Endothelial cell of umbilical vein (primary cell): ENCODE measurements at regions of chr14 and their contacts with region 1.

Region 1: DNA sequence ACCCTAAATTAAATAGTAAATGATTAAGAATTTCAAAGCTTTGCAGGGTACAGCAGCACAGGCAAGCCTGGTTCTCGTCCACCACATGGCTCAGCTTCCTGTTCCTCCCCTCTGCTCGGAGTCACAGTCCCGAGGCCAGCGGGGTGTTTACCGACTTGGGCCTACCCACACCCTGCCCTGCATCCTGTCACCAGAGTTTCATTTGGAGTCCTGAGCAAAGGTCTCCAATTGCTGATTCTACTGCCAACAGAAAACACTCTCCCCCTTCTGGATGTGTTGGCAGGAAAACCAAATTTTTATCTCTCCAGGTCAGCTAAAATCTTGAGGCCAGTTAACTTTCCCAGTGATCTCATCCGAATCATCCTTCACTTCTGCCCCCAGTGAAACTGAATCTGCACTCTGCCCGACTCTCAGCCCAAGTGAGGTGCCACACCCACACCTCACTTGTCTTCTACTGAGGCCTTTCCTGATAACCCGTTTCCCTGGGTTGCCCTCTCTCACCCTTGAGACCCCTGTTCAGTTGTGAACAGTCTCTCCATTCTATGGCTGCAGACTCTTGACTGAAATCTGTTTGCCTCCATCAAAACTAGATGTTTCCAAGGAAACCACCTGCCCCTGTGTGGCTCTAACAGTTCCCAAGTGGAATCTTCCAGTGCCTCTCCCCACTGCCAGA is 71.2 kb downstream of the VCPKMT start:
- DNase-seq: peak; percentile 69
- H3K4me3 ChIP-seq: no peak overlapping the region
- H3K27ac ChIP-seq: no peak overlapping the region
- H3K4me1 ChIP-seq: peaks cover 35% of the 10 kb centered on the region
- H3K27me3 ChIP-seq: no peaks in the 10 kb centered on the region
- CTCF ChIP-seq: no peak
- POLR2A ChIP-seq: no peak

Region 2: DNA sequence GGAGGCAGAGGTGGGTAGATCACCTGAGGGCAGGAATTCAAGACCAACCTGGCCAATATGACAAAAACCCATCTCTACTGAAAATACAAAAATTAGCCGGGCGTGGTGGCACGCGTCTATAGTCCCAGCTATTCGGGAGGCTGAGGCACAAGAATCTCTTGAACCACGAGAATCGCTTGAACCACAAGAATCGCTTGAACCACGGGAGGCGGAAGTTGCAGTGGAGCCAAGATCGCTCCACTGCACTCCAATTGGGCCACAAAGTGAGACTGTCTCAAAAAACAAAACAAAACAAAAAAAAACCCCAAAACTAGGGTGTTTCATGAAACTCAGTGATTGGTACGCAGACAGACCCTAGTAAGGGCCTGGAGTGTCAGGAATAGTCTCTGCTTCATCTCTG is 158.7 kb before region 1 on chr14:
- CTCF ChIA-PET with region 1: no interaction called
- POLR2A ChIA-PET with region 1: no interaction called
- dilution Hi-C with region 1: no loop called
- intact Hi-C with region 1: no loop called
- DNase-seq: no peak
- H3K4me3 ChIP-seq: no peak overlapping the region
- H3K27ac ChIP-seq: no peak overlapping the region
- H3K4me1 ChIP-seq: no peaks in the 10 kb centered on the region
- H3K27me3 ChIP-seq: no peaks in the 10 kb centered on the region
- CTCF ChIP-seq: no peak
- POLR2A ChIP-seq: no peak

Region 3: GRCh38 chr14:50099335-50099734 is 54.2 kb after region 1 on chr14:
- CTCF ChIA-PET with region 1: interaction called, 3 read pairs
- POLR2A ChIA-PET with region 1: no interaction called
- dilution Hi-C with region 1: no loop called
- intact Hi-C with region 1: loop called (anchors 10 kb)
- DNase-seq: no peak
- H3K4me3 ChIP-seq: no peak overlapping the region
- H3K27ac ChIP-seq: no peak overlapping the region
- H3K4me1 ChIP-seq: no peaks in the 10 kb centered on the region
- H3K27me3 ChIP-seq: no peaks in the 10 kb centered on the region
- CTCF ChIP-seq: no peak
- POLR2A ChIP-seq: no peak

Region 4: DNA sequence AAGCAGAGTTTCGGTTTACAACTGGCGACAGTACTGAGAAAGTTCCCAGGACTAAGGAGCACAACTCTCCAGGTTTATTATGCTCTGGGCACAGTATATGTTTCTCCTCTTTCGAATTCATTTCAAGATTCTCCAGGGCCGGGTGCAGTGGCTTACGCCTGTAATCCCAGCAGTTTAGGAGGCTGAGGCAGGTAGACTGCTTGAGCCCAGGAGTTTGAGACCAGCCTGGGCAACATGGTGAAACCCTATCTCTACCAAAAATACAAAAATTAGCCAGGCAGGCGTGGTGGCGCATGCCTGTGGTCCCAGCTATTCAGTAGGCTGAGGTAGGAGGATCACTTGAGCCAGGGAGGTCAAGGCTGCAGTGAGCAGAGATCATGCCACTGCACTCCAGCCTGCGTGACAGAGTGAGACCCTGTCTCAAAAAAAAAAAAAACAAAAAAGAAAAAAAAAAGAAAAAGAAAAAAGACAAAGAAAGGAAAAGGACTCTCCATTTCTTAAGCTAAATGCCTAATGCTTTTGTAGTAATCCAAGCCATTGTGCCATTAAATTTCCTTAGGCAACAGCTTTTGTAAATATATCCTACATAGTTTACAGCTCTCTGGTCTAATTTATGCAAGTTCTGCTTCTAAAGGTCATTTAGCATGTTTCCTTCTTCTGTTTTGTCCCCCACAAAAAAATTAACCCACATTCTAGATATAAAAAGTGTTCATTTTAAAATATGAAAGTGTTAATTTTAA is 549.6 kb after region 1 on chr14:
- CTCF ChIA-PET with region 1: no interaction called
- POLR2A ChIA-PET with region 1: no interaction called
- dilution Hi-C with region 1: no loop called
- intact Hi-C with region 1: no loop called
- DNase-seq: no peak
- H3K4me3 ChIP-seq: no peak overlapping the region
- H3K27ac ChIP-seq: no peak overlapping the region
- H3K4me1 ChIP-seq: peaks cover 7% of the 10 kb centered on the region
- H3K27me3 ChIP-seq: no peaks in the 10 kb centered on the region
- CTCF ChIP-seq: no peak
- POLR2A ChIP-seq: no peak